ENCODE measurements at regions of chr3 and their contacts with region 1.

Region 1: DNA sequence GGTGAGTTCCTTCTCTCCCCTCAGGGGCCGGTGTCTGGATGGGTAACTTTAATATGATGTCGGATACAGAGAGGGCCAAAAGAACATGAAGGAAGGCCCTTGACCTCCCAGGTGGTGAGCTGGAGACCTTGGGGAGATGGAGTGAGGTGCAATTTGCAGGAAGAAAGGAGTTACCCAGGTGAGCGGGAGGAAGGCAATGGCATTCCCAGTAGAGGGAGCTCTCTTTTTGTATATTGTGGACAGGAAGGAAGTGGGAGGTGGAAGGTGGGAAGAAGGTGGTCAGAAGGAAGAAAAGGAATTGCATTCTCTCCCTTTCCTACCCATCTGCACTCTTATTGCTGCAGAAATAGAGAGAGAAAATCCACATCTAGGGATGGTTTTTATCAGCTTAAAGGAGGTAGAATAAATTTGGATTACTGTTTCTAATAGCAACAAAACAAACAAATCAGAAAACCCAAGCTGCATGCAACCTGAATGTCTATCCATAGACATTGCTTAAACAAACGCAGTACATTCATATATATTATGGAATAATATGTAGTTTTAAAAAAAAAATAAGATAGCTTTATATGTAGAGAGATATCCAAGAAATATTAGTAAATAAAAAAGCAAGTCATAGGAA is 169.0 kb upstream of the TSC22D2 start:
- DNase-seq: peak; percentile 38 to 50
- H3K4me3 ChIP-seq: no peak overlapping the region
- H3K27ac ChIP-seq: no peak overlapping the region
- H3K4me1 ChIP-seq: peaks cover 0 to 8% (median 2%) of the 10 kb centered on the region in 4 experiments; a peak in 4 of 7 replicates
- H3K27me3 ChIP-seq: no peaks in the 10 kb centered on the region
- CTCF ChIP-seq: peak; percentile 44 to 84 (median 72)
- EP300 ChIP-seq: no peak
- POLR2A ChIP-seq: no peak
- RAD21 ChIP-seq: peak; percentile 87 to 90

Region 2: DNA sequence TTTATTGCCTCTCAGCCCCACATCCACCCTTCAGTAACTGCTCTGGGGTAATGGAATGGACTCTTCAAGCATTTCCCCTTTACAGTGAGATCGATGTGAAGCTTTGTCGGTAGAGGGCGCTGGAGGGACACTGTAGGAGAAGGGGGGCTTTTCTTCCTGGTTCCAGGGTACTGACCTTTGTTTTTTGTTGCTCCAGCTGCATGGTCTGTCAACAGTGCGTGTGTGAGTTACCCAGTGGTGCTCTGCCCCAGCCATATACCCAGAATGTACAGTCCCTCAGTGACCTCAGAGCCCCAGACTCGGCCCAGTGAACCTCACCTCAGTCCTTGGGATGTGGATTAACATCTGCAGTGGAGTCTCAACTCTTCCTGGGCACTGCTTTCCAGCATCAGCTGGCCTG is 11.3 kb before region 1 on chr3:
- CTCF ChIA-PET with region 1: interaction called, 77 read pairs
- POLR2A ChIA-PET with region 1: interaction called, 3 read pairs
- DNase-seq: peak; percentile 51 to 91
- H3K4me3 ChIP-seq: no peak overlapping the region
- H3K27ac ChIP-seq: 0 out of 2 replicates have a peak overlapping the region, but pooled peaks have one; percentile 16
- H3K4me1 ChIP-seq: peaks cover 0 to 3% (median 1%) of the 10 kb centered on the region in 4 experiments; a peak in 4 of 7 replicates
- H3K27me3 ChIP-seq: no peaks in the 10 kb centered on the region; a peak in 1 of 7 replicates
- CTCF ChIP-seq: peak; percentile 70 to 97 (median 80)
- EP300 ChIP-seq: no peak
- POLR2A ChIP-seq: no peak
- RAD21 ChIP-seq: peak; percentile 90 to 91

Region 3: DNA sequence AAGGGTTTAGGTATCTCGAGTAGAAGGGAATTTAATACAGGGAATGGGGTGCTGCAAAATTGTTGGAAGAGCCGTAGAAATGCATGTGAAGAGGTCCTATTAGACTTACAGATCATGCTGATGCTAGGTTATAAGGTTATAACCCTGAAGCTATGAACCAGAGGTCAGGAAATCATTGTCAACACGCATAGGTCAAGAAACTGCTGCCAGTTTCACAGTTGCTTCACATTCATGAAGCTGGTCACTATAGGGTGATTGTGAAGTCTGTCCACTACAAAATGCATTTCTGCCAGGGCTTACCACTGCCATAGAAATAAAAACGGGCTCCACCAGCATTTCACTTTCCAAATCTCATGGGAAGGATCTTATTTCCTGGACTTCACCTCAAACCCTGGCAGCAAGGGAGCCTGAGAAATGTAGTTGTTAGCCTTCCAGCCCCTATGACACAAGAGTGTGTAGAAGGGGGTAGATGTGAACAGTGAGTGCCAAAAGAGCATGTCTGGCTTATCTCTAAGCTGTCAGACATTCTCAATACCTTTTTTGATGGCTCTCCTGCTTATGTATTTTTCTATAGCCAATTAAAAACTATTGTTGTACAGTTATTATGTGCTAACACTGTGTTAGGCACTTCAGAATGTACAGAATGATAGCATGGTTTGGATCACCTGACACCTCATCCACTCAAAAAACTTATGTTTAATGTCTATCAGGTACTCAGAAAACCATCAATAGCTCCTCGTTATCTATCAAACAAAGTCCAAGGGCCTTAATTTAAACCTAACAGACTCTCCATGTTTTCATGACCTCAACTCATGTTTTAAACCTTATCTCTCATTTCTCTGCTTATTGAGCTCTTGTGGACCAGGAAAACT is 20.7 kb after region 1 on chr3:
- CTCF ChIA-PET with region 1: interaction called, 20 read pairs
- POLR2A ChIA-PET with region 1: interaction called, 3 read pairs
- DNase-seq: no peak
- H3K4me3 ChIP-seq: no peak overlapping the region
- H3K27ac ChIP-seq: no peak overlapping the region
- H3K4me1 ChIP-seq: no peaks in the 10 kb centered on the region
- H3K27me3 ChIP-seq: peaks cover 0 to 1% (median 0%) of the 10 kb centered on the region in 4 experiments; a peak in 1 of 7 replicates
- CTCF ChIP-seq: no peak
- EP300 ChIP-seq: no peak
- POLR2A ChIP-seq: no peak
- RAD21 ChIP-seq: no peak

Region 4: GRCh38 chr3:150278843-150279381 is 39.8 kb after region 1 on chr3:
- CTCF ChIA-PET with region 1: interaction called, 19 read pairs
- POLR2A ChIA-PET with region 1: no interaction called
- DNase-seq: no peak
- H3K4me3 ChIP-seq: no peak overlapping the region
- H3K27ac ChIP-seq: no peak overlapping the region
- H3K4me1 ChIP-seq: peaks cover 0 to 3% (median 0%) of the 10 kb centered on the region in 4 experiments; a peak in 3 of 7 replicates
- H3K27me3 ChIP-seq: no peaks in the 10 kb centered on the region
- CTCF ChIP-seq: no peak
- EP300 ChIP-seq: no peak
- POLR2A ChIP-seq: no peak
- RAD21 ChIP-seq: no peak

Region 5: DNA sequence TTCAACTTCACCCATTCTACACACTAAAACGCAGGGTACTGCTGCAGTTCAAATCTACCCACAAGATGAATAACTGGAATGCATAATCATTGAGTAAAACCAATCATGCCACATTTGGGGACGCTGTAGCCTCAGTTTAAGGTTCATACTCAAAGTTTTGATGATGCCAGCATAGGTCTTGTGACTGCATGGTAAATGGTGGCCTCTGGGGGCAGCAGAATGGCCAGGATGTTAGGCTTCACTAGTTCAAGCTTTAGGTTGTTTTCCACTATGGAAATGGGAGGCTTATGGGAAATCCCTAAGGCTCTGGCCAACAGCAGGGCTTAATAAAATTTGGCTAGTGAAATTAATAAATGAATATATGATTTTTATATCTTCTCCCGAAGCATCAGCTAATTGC is 64.7 kb after region 1 on chr3:
- CTCF ChIA-PET with region 1: interaction called, 27 read pairs
- POLR2A ChIA-PET with region 1: no interaction called
- DNase-seq: no peak
- H3K4me3 ChIP-seq: no peak overlapping the region
- H3K27ac ChIP-seq: no peak overlapping the region
- H3K4me1 ChIP-seq: no peaks in the 10 kb centered on the region
- H3K27me3 ChIP-seq: no peaks in the 10 kb centered on the region
- CTCF ChIP-seq: peak; percentile 53 to 74 (median 73)
- EP300 ChIP-seq: no peak
- POLR2A ChIP-seq: no peak
- RAD21 ChIP-seq: peak; percentile 59 to 72

Region 6: GRCh38 chr3:150469031-150469942 is 230.2 kb after region 1 on chr3:
- CTCF ChIA-PET with region 1: interaction called, 15 read pairs
- POLR2A ChIA-PET with region 1: no interaction called
- DNase-seq: peak in 1 of 2 experiments; percentile 9
- H3K4me3 ChIP-seq: no peak overlapping the region
- H3K27ac ChIP-seq: no peak overlapping the region
- H3K4me1 ChIP-seq: peaks cover 0 to 6% (median under 1%) of the 10 kb centered on the region in 4 experiments; a peak in 1 of 7 replicates
- H3K27me3 ChIP-seq: no peaks in the 10 kb centered on the region
- CTCF ChIP-seq: no peak
- EP300 ChIP-seq: no peak
- POLR2A ChIP-seq: no peak
- RAD21 ChIP-seq: no peak

Region 7: GRCh38 chr3:150503402-150504099 is 264.4 kb after region 1 on chr3:
- CTCF ChIA-PET with region 1: interaction called, 76 read pairs
- POLR2A ChIA-PET with region 1: no interaction called
- DNase-seq: no peak
- H3K4me3 ChIP-seq: no peak overlapping the region
- H3K27ac ChIP-seq: no peak overlapping the region
- H3K4me1 ChIP-seq: no peaks in the 10 kb centered on the region
- H3K27me3 ChIP-seq: no peaks in the 10 kb centered on the region
- CTCF ChIP-seq: peak in 2 of 3 experiments; percentile 28; a peak in 2 of 4 replicates
- EP300 ChIP-seq: no peak
- POLR2A ChIP-seq: no peak
- RAD21 ChIP-seq: peak; percentile 0 to 24; a peak in 1 of 4 replicates

Measured in H1 (cell line).